ENCODE measurements at regions of chr15 and their contacts with region 1.

Region 1: GRCh38 chr15:100111103-100112060 is 230.4 kb downstream of the ADAMTS17 start:
- DNase-seq: peak; percentile 72
- ATAC-seq: peak; percentile 66

Region 2: DNA sequence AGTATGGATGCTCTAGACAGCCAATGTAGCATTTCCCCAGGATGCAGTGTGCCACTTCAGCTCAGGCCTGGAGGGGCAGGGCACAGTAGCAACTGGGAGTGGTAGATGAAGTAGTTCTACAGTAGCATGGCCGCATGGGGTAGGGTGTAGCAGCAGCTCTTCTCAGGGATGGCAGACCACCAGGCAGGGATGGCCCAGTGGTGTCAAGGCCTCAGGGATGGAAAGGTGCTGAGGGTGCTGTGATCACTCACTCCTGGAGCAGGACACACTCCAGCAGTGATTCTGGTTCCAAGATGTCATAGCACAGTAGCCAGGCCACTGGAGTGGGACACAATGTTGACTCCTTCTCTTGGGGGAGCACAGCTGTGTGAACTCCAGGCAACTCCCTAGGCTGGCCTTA is 167.3 kb before region 1 on chr15:
- intact Hi-C with region 1: no loop called
- DNase-seq: no peak
- ATAC-seq: no peak

Region 3: GRCh38 chr15:99981191-99981647 is 130.2 kb before region 1 on chr15:
- intact Hi-C with region 1: loop called (anchors 5 kb)
- DNase-seq: no peak
- ATAC-seq: no peak

Region 4: DNA sequence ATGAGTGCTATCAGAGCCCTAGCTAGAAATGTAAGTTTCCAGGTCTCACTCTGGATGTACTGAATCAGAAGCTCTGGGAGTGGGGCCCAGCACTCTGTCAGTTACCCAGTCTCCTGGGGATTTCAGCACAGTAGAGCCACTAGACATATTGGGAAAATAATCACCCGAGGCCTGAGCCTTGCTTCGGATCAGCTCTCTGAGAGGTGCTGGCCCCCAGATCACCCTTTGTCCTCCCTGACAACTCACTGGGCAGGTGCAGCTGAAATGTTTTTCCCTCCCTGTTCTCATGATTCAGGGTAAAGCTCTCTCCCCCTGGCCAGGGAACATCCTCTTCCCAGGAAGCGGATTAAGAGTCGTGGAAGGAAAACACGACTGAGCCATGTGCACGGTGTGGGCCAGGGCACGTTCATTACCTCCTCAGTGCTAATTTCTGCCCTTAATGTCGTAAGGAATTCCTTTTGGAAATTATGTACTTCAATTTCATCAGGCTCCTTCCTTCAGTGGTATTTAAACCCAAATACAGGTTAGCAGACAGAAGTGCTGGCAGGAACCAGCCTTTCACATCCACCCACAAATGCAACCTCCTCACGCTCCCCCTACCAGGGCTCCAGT is 81.4 kb before region 1 on chr15:
- intact Hi-C with region 1: loop called (anchors 5 kb)
- DNase-seq: no peak
- ATAC-seq: no peak

Region 5: GRCh38 chr15:100043015-100043641 is 68.3 kb before region 1 on chr15:
- intact Hi-C with region 1: loop called (anchors 5 kb)
- DNase-seq: no peak
- ATAC-seq: peak; percentile 63

Region 6: GRCh38 chr15:100060276-100061255 is 50.8 kb before region 1 on chr15:
- intact Hi-C with region 1: loop called (anchors 2 kb)
- DNase-seq: no peak
- ATAC-seq: peak; percentile 52

Region 7: DNA sequence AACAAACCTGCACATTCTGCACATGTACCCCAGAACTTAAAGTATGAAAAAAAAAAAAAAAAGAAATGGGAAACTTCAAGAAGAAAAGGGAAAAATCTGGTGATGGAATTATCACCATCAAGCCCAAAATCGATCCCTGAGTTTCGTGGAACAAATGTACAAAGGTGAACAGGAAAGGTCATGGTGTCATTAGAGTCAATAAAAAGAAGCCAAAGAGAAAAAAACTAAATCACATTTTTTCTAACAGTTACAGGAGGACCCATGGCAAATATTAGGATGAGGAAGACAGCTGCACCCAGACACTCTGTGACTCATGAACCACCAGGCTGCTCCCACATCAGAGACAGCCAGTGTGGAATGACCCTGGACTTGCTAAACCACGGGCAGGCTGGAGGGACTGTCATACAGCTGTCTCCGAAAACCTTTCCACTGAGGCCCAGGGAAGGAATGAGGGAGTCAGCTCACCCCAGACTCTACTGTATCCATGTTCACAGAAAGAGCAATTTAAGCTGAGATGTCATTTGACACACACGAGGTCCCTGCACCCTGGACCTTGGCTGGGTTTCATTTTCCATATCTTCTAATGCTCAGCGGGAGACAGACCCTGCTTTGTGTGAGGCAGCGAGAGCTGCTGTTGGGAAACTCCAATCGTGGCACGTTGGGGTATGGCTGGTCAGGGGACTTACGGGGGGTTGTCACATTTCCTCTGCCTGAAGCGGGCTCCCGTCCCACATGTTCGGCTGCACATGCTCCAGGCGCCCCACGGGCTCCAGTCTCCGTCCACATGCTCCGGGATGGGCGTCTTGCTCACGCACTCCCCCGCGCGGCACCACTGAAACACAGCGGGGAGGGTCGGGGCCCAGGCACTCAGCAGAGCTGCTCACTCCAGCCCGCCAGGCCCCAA is 20.2 kb after region 1 on chr15:
- intact Hi-C with region 1: no loop called
- DNase-seq: peak; percentile 79
- ATAC-seq: peak; percentile 92

Region 8: DNA sequence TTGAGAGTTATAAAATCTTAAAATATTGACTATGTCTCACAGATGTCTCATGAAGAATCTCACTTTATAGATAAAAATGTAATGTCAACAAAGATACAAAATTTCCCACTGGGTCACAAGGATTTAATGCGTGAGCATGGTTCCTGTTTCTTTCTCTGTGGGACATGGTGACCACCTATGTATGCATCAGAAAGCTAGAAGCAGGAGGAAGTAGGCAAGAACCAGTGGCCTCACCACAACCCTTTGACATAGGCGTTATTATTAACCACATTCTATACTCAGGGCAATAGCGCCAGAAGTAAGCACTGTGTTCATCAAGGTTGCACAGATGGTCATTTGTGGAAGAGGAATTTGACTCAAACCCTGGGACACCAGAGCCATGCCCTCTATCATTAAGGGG is 242.1 kb after region 1 on chr15:
- intact Hi-C with region 1: no loop called
- DNase-seq: no peak
- ATAC-seq: no peak

Measured in Right ventricle myocardium inferior (tissue), 1 donor.